ENCODE measurements at regions of chr17 and their contacts with region 1.

Region 1: GRCh38 chr17:7915611-7916382 is at the start of gene RNF227:
- DNase-seq: peak; percentile 81 to 85
- H3K4me3 ChIP-seq: peak within 1 kb of the TSS; percentile 61
- H3K4me3 Mint-ChIP-seq: peak within 1 kb of the TSS; percentile 85
- H3K27ac Mint-ChIP-seq: peak within 1 kb of the TSS; percentile 92
- H3K4me1 ChIP-seq: 0 out of 2 replicates have a peak, but pooled peaks cover 3% of the 10 kb centered on the region
- H3K4me1 Mint-ChIP-seq: no peaks in the 10 kb centered on the region
- H3K27me3 ChIP-seq: no peaks in the 10 kb centered on the region
- H3K27me3 Mint-ChIP-seq: no peaks in the 10 kb centered on the region
- CTCF ChIP-seq: no peak
- total RNA-seq, gene RNF227: 4.0 and 5.0 TPM in 2 replicates

Region 2: GRCh38 chr17:7803981-7804380 is 111.8 kb before region 1 on chr17:
- CTCF ChIA-PET with region 1: no interaction called
- POLR2A ChIA-PET with region 1: no interaction called
- intact Hi-C with region 1: no loop called
- DNase-seq: no peak
- H3K4me3 ChIP-seq: no peak overlapping the region
- H3K4me3 Mint-ChIP-seq: no peak overlapping the region
- H3K27ac Mint-ChIP-seq: no peak overlapping the region
- H3K4me1 ChIP-seq: no peaks in the 10 kb centered on the region
- H3K4me1 Mint-ChIP-seq: no peaks in the 10 kb centered on the region
- H3K27me3 ChIP-seq: no peaks in the 10 kb centered on the region
- H3K27me3 Mint-ChIP-seq: no peaks in the 10 kb centered on the region
- CTCF ChIP-seq: no peak

Region 3: GRCh38 chr17:7931709-7932482 is 16.1 kb after region 1 on chr17 and contains the starts of genes CNTROB and TRAPPC1:
- CTCF ChIA-PET with region 1: interaction called, 14 read pairs
- POLR2A ChIA-PET with region 1: interaction called, 10 read pairs
- intact Hi-C with region 1: loop called (anchors 1 kb)
- DNase-seq: peak; percentile 95 to 97
- H3K4me3 ChIP-seq: peak within 1 kb of the TSS; percentile 80
- H3K4me3 Mint-ChIP-seq: peak within 1 kb of the TSS; percentile 99
- H3K27ac Mint-ChIP-seq: peak within 1 kb of the TSS; percentile 97
- H3K4me1 ChIP-seq: 0 out of 2 replicates have a peak, but pooled peaks cover 2% of the 10 kb centered on the region
- H3K4me1 Mint-ChIP-seq: peaks cover 11% of the 10 kb centered on the region
- H3K27me3 ChIP-seq: no peaks in the 10 kb centered on the region
- H3K27me3 Mint-ChIP-seq: no peaks in the 10 kb centered on the region
- CTCF ChIP-seq: no peak
- total RNA-seq, gene CNTROB: 22.6 and 24.2 TPM in 2 replicates
- total RNA-seq, gene TRAPPC1: 75.5 and 96.2 TPM in 2 replicates

Region 4: GRCh38 chr17:7989781-7990655 is 74.2 kb after region 1 on chr17:
- CTCF ChIA-PET with region 1: interaction called, 21 read pairs
- POLR2A ChIA-PET with region 1: interaction called, 4 read pairs
- intact Hi-C with region 1: loop called (anchors 1 kb)
- DNase-seq: peak; percentile 66 to 88
- H3K4me3 ChIP-seq: peak overlapping the region; percentile 57
- H3K4me3 Mint-ChIP-seq: peak overlapping the region; percentile 61
- H3K27ac Mint-ChIP-seq: no peak overlapping the region
- H3K4me1 ChIP-seq: no peaks in the 10 kb centered on the region
- H3K4me1 Mint-ChIP-seq: no peaks in the 10 kb centered on the region
- H3K27me3 ChIP-seq: no peaks in the 10 kb centered on the region
- H3K27me3 Mint-ChIP-seq: no peaks in the 10 kb centered on the region
- CTCF ChIP-seq: peak; percentile 75 to 80

Region 5: GRCh38 chr17:8041249-8041928 is 125.6 kb after region 1 on chr17:
- CTCF ChIA-PET with region 1: interaction called, 8 read pairs
- POLR2A ChIA-PET with region 1: interaction called, 6 read pairs
- intact Hi-C with region 1: loop called (anchors 1 kb)
- DNase-seq: peak in 1 of 2 experiments; percentile 39
- H3K4me3 ChIP-seq: no peak overlapping the region
- H3K4me3 Mint-ChIP-seq: no peak overlapping the region
- H3K27ac Mint-ChIP-seq: peak overlapping the region; percentile 42
- H3K4me1 ChIP-seq: peaks cover 7% of the 10 kb centered on the region
- H3K4me1 Mint-ChIP-seq: no peaks in the 10 kb centered on the region
- H3K27me3 ChIP-seq: no peaks in the 10 kb centered on the region
- H3K27me3 Mint-ChIP-seq: no peaks in the 10 kb centered on the region
- CTCF ChIP-seq: peak; percentile 25 to 32